Posterior vena cava (tissue), 2 donors: ENCODE measurements at regions of chr19 and their contacts with region 1.

Region 1: DNA sequence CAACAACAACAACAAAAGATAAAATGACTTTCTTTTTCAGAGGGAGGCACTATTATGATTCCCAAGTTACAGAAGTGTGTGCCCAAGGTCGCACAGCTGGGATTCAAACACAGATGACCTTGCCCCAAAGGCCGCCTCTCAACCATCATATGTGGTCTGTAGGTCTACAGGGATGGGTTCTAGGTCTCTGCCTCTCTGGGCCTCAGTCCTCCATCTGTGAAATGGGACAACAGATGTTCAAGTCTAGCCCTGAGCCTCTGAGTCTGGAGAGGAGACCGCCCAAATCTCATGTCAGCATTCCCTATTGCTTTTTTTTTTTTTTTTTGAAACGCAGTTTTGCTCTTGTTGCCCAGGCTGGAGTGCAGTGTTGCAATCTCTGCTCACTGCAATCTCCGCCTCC is 4.9 kb downstream of the NPAS1 start:
- DNase-seq: no peak

Region 2: GRCh38 chr19:46967578-46968027 is 56.9 kb before region 1 on chr19:
- intact Hi-C with region 1: loop called in 1 of 2 experiments (anchors 2 kb)
- DNase-seq: peak; percentile 94